Cardiac septum (tissue), 1 donor: ENCODE measurements at regions of chr18 and their contacts with region 1.

Region 1: DNA sequence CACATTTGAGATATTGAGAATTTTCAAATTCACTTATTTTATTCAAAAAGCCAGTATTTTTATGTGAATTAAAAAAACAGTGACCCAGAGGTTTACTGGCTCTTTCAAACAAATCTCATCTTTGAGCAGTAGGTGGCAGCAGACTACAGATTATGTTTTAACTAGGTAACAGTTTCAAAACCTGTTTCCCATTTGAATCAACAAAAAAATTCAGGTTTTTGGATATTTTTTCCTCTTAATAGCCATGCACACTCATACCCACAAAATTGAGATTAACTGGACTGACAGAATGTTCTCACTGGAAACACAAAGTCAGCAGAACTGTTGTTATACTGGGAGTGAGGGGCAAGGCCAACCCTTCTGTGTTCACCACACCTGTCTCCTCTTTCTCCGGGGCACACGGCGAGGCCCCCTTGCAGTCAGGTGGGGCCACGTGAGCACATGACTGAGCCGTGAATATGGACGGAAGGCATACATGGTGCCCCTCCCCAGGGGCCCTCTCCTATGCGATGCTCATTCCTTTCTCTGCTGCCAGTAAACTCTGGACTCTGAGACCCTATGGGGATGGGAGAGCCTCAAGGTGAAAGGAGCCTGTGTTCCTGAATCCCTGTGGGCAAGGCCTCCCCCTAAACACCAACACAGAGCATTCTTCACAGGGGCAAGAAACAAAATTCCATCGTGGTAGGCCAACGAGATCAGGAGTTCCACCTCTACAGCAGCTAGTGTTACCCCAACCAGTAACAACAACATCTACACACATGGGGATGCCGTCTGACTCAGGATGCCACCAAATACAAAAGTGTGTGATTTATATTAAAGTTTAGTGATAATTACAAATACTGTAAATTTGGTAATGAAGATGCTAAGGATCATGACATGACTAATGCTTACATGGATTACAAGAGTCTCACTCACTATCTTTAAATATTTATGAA is 80.4 kb downstream of the LPIN2 start:
- DNase-seq: no peak

Region 2: GRCh38 chr18:2981212-2981728 is 48.8 kb after region 1 on chr18:
- intact Hi-C with region 1: loop called (anchors 5 kb)
- DNase-seq: no peak

Region 3: GRCh38 chr18:3062798-3063680 is 130.5 kb after region 1 on chr18:
- intact Hi-C with region 1: loop called (anchors 1 kb)
- DNase-seq: peak; percentile 82

Region 4: DNA sequence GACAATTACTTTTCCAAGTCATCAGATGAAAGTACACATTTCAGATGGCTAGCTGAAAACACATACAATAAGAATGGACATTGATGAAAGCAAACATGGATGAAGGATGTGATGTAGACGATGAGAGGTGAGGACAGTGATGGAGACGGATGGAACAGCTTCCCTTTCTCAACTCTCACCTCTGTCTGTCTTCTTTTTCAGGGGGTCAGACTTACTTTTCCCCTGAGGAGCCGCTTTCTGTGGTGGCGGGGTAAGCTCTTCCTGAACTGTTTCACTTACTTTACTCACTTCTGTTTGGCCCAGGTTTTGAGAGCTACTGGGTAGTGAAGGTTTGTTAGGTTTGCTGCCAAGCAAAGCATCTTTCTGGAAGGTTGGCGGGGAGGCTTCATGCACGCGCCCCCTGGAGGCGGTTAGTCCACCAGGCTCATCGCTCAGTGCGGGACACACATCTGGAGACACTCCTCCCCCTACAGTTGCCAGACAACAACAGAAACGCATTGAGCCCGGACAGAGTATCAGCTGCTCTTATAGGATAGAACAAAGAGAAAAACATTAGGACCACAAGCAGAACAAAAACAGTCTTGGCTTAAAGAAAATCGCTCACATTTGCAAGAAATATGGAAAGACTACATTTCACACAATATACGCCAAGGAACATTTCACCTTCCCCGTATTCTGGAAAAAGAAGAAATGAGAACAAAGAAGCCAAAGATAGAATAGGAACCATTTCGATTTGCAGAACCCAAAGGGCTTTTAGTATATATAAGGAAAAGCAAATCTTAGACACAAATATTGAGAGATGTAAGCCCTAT is 196.7 kb after region 1 on chr18:
- intact Hi-C with region 1: loop called (anchors 10 kb)
- DNase-seq: peak; percentile 89

Region 5: GRCh38 chr18:3151399-3152264 is 219.1 kb after region 1 on chr18:
- intact Hi-C with region 1: loop called (anchors 10 kb)
- DNase-seq: no peak

Region 6: GRCh38 chr18:3219631-3220335 is 287.3 kb after region 1 on chr18 and contains the start of gene MYOM1:
- intact Hi-C with region 1: no loop called
- DNase-seq: no peak
- total RNA-seq, gene MYOM1: 878 TPM

Region 7: GRCh38 chr18:3245853-3246634 is 313.5 kb after region 1 on chr18:
- intact Hi-C with region 1: loop called (anchors 5 kb)
- DNase-seq: peak; percentile 96